ENCODE measurements at regions of chr2 and their contacts with region 1.

Region 1: DNA sequence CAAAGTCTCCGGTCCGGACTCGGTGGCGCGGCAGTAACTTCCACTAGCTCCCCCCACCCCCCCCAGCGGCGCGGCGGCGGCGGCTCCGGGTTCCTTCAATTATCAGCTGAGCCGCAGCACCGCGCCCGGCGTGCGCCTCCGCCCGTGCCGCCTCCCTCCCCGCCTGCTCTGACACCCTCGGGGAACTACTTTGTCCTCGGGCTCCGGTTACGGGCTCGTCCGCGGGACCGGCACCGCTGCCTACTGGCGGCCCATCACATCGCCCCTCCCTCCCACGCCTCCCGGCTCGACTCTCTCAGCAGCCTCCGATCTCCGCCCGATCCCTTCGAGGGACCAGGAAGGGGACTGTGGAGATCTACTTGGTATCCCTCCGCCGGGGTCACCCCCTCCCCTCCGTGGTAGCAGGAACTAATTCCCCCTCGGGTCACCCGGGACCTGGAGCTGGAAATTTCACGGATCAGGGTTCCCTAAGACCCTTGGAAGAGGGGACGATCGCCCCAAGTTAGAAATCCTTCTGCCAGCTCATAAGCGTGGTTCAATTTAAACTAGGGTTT is at the start of gene TRIP12:
- DNase-seq: peak; percentile 87 to 97 (median 95)
- ATAC-seq: peak; percentile 88
- H3K4me3 ChIP-seq: peak within 1 kb of the TSS; percentile 99
- H3K4me3 Mint-ChIP-seq: peak within 1 kb of the TSS; percentile 85 to 99 (median 96)
- H3K27ac ChIP-seq: peak within 1 kb of the TSS; percentile 98
- H3K27ac Mint-ChIP-seq: peak within 1 kb of the TSS; percentile 93 to 100 (median 98)
- H3K4me1 ChIP-seq: peaks cover 18 to 35% of the 10 kb centered on the region in 2 donors
- H3K4me1 Mint-ChIP-seq: peaks cover 30 to 62% (median 49%) of the 10 kb centered on the region in 7 donors
- H3K27me3 ChIP-seq: no peaks in the 10 kb centered on the region
- H3K27me3 Mint-ChIP-seq: no peaks in the 10 kb centered on the region
- total RNA-seq, gene TRIP12: 184 to 247 (median 231) TPM

Region 2: GRCh38 chr2:229800997-229801754 is 120.8 kb before region 1 on chr2:
- CTCF ChIA-PET with region 1: interaction called, 10 read pairs
- POLR2A ChIA-PET with region 1: interaction called, 4 read pairs
- intact Hi-C with region 1: loop called in 1 of 2 experiments (anchors 1 kb)
- DNase-seq: peak; percentile 33 to 76 (median 66)
- ATAC-seq: peak; percentile 70
- H3K4me3 ChIP-seq: no peak overlapping the region
- H3K4me3 Mint-ChIP-seq: no peak overlapping the region
- H3K27ac ChIP-seq: no peak overlapping the region
- H3K27ac Mint-ChIP-seq: peak overlapping the region in 6 of 9 donors; percentile 13 to 65 (median 40)
- H3K4me1 ChIP-seq: no peaks in the 10 kb centered on the region
- H3K4me1 Mint-ChIP-seq: peaks cover 0 to 6% (median 0%) of the 10 kb centered on the region in 7 donors
- H3K27me3 ChIP-seq: no peaks in the 10 kb centered on the region
- H3K27me3 Mint-ChIP-seq: no peaks in the 10 kb centered on the region

Region 3: GRCh38 chr2:229852565-229852964 is 69.4 kb before region 1 on chr2:
- CTCF ChIA-PET with region 1: interaction called, 4 read pairs
- POLR2A ChIA-PET with region 1: interaction called, 4 read pairs
- intact Hi-C with region 1: loop called (anchors 1 to 2 kb)
- DNase-seq: peak in 7 of 9 donors; percentile 45 to 70 (median 58)
- ATAC-seq: peak; percentile 91
- H3K4me3 ChIP-seq: no peak overlapping the region
- H3K4me3 Mint-ChIP-seq: peak overlapping the region in 9 of 10 donors; percentile 14 to 64 (median 27)
- H3K27ac ChIP-seq: peak overlapping the region; percentile 53
- H3K27ac Mint-ChIP-seq: peak overlapping the region; percentile 51 to 96 (median 86)
- H3K4me1 ChIP-seq: peaks cover 25 to 37% of the 10 kb centered on the region in 2 donors
- H3K4me1 Mint-ChIP-seq: peaks cover 30 to 92% (median 73%) of the 10 kb centered on the region in 7 donors
- H3K27me3 ChIP-seq: no peaks in the 10 kb centered on the region
- H3K27me3 Mint-ChIP-seq: no peaks in the 10 kb centered on the region

Region 4: DNA sequence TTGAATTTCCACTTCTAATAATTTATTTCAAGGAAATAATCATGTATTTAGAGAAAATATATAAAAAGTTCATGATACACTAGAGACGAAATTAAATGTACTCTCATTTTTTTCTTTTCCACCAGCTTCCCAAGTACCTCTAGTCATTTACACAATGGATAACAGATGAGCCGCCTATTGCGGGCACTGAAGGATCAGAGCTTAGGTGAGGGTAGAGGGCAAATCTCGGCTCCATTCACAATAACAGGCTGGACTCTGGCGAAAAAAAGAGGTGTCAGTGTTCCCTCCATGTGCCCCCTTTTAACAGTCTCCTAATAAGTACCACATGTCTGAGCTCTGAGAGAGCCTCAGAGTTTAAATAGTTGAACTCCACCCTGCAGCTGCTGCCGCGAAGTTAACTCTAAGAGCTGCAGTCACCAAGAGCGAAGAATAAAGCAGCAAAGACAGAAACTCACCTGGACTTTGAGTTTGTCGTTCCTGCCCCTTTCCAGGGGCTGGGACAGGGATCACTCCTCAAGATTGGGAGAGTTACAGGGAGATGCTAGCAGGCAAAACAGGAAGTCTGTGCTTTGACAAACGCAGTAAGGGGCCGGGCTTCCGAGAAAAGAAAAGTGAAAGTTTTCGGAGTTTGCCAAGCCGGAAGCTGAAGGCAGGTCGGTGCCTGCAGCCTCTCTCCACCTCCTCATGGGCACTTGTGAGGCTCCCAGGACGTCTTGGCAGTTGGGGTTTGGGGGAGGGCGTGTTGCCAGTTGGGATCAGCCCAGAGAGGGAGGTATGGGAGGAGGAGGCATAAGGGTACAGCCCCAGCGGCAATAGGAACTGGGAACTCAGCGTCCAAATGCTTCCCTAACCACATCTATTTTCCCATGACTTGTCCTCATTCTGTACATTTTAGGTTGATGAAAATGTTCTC is 297.7 kb after region 1 on chr2 and contains the start of gene SP110:
- CTCF ChIA-PET with region 1: no interaction called
- POLR2A ChIA-PET with region 1: no interaction called
- intact Hi-C with region 1: loop called (anchors 2 kb)
- DNase-seq: peak; percentile 38 to 84 (median 81)
- ATAC-seq: peak; percentile 93
- H3K4me3 ChIP-seq: peak within 1 kb of the TSS; percentile 95
- H3K4me3 Mint-ChIP-seq: peak within 1 kb of the TSS; percentile 89 to 100 (median 99)
- H3K27ac ChIP-seq: peak within 1 kb of the TSS; percentile 83
- H3K27ac Mint-ChIP-seq: peak within 1 kb of the TSS; percentile 94 to 100 (median 99)
- H3K4me1 ChIP-seq: peaks cover 22 to 36% of the 10 kb centered on the region in 2 donors
- H3K4me1 Mint-ChIP-seq: peaks cover 44 to 75% (median 67%) of the 10 kb centered on the region in 7 donors
- H3K27me3 ChIP-seq: no peaks in the 10 kb centered on the region
- H3K27me3 Mint-ChIP-seq: no peaks in the 10 kb centered on the region
- total RNA-seq, gene SP110: 97.5 to 182 (median 117) TPM

Region 5: GRCh38 chr2:230636684-230637271 is 714.8 kb after region 1 on chr2:
- CTCF ChIA-PET with region 1: no interaction called
- POLR2A ChIA-PET with region 1: no interaction called
- intact Hi-C with region 1: loop called in 1 of 2 experiments (anchors 10 kb)
- DNase-seq: no peak
- ATAC-seq: no peak
- H3K4me3 ChIP-seq: no peak overlapping the region
- H3K4me3 Mint-ChIP-seq: peak overlapping the region in 1 of 10 donors; percentile 23
- H3K27ac ChIP-seq: no peak overlapping the region
- H3K27ac Mint-ChIP-seq: peak overlapping the region in 2 of 9 donors; percentile 28 to 60
- H3K4me1 ChIP-seq: no peaks in the 10 kb centered on the region
- H3K4me1 Mint-ChIP-seq: peaks cover under 1 to 19% (median 14%) of the 10 kb centered on the region in 7 donors
- H3K27me3 ChIP-seq: no peaks in the 10 kb centered on the region
- H3K27me3 Mint-ChIP-seq: no peaks in the 10 kb centered on the region

Region 6: GRCh38 chr2:231662028-231662810 is 1740.2 kb after region 1 on chr2:
- CTCF ChIA-PET with region 1: no interaction called
- POLR2A ChIA-PET with region 1: no interaction called
- intact Hi-C with region 1: loop called in 1 of 2 experiments (anchors 5 kb)
- DNase-seq: peak; percentile 93 to 100 (median 99)
- ATAC-seq: peak; percentile 93
- H3K4me3 ChIP-seq: peak overlapping the region; percentile 73
- H3K4me3 Mint-ChIP-seq: peak overlapping the region; percentile 70 to 87 (median 84)
- H3K27ac ChIP-seq: peak overlapping the region; percentile 88
- H3K27ac Mint-ChIP-seq: peak overlapping the region; percentile 89 to 99 (median 96)
- H3K4me1 ChIP-seq: peaks cover 8 to 14% of the 10 kb centered on the region in 2 donors
- H3K4me1 Mint-ChIP-seq: peaks cover 8 to 34% (median 23%) of the 10 kb centered on the region in 7 donors
- H3K27me3 ChIP-seq: no peaks in the 10 kb centered on the region
- H3K27me3 Mint-ChIP-seq: no peaks in the 10 kb centered on the region